Naive thymus-derived CD4-positive, alpha-beta T cell (primary cell): ENCODE measurements at regions of chr1 and their contacts with region 1.

Region 1: GRCh38 chr1:231040019-231040799 is at the start of gene FAM89A:
- DNase-seq: peak; percentile 44 to 79 (median 70)
- ATAC-seq: peak; percentile 91
- H3K4me3 ChIP-seq: peak within 1 kb of the TSS; percentile 67
- H3K4me3 Mint-ChIP-seq: peak within 1 kb of the TSS; percentile 81 to 90 (median 82)
- H3K27ac ChIP-seq: peak within 1 kb of the TSS; percentile 63
- H3K27ac Mint-ChIP-seq: peak within 1 kb of the TSS in 8 of 9 donors; percentile 36 to 83 (median 69)
- H3K4me1 ChIP-seq: peaks cover 10 to 13% of the 10 kb centered on the region in 2 donors
- H3K4me1 Mint-ChIP-seq: peaks cover 27 to 49% (median 36%) of the 10 kb centered on the region in 7 donors
- H3K27me3 ChIP-seq: no peaks in the 10 kb centered on the region
- H3K27me3 Mint-ChIP-seq: peaks cover 0 to 37% (median 0%) of the 10 kb centered on the region in 5 donors
- total RNA-seq, gene FAM89A: 4.5 to 9.0 (median 6.9) TPM

Region 2: GRCh38 chr1:230054092-230054749 is 986.0 kb before region 1 on chr1:
- CTCF ChIA-PET with region 1: no interaction called
- POLR2A ChIA-PET with region 1: no interaction called
- intact Hi-C with region 1: no loop called
- DNase-seq: no peak
- ATAC-seq: no peak
- H3K4me3 ChIP-seq: no peak overlapping the region
- H3K4me3 Mint-ChIP-seq: no peak overlapping the region
- H3K27ac ChIP-seq: no peak overlapping the region
- H3K27ac Mint-ChIP-seq: no peak overlapping the region
- H3K4me1 ChIP-seq: no peaks in the 10 kb centered on the region
- H3K4me1 Mint-ChIP-seq: peaks cover 3 to 16% (median 6%) of the 10 kb centered on the region in 7 donors
- H3K27me3 ChIP-seq: peaks cover 0 to 3% of the 10 kb centered on the region in 2 donors
- H3K27me3 Mint-ChIP-seq: peaks cover 0 to 26% (median 4%) of the 10 kb centered on the region in 5 donors

Region 3: DNA sequence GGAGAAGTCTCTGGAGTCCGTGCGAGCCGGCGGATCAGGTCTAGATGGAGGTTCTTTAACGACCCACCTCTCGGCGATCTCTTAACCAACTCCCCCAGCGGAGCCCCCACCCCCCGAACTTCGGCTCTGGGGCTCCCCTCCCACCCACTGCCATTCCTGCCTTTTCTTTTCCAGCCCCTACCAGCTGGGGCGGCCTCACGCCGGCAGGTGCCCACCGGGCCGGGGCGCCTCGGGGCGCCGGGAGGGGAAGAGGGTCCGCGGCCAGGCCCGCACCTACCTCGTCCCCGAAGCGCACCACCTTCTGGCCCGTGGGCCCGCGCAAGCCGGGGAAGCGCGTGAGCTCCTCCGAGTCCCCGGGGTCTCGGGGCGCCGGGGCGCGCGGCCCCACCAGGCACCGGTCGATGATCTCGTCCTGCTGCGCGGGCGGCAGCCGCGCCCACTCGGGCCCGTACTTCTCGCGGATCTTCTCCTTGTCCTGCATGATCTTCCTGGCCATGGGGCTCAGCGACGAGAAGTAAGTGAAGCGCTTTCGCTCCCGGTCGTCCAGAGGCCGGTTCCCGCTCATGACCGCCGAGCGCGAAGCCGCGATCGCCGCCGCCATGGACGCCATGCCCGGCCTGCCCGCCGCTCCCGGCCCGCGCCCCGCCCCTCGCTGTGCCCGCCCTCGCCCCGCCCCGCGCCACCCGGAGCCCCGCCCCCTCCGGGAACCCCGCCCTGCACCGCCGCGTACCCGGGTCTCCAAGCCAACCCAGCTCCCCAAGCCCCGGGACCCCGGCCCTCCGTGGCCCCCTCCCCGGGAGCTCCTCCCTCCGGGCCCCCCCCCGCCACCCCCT is 172.1 kb before region 1 on chr1 and contains the start of gene C1orf198:
- CTCF ChIA-PET with region 1: no interaction called
- POLR2A ChIA-PET with region 1: no interaction called
- intact Hi-C with region 1: loop called (anchors 1 kb)
- DNase-seq: peak; percentile 48 to 84 (median 69)
- ATAC-seq: peak; percentile 97
- H3K4me3 ChIP-seq: peak within 1 kb of the TSS; percentile 76
- H3K4me3 Mint-ChIP-seq: peak within 1 kb of the TSS; percentile 70 to 94 (median 88)
- H3K27ac ChIP-seq: peak within 1 kb of the TSS; percentile 67
- H3K27ac Mint-ChIP-seq: peak within 1 kb of the TSS in 8 of 9 donors; percentile 29 to 84 (median 62)
- H3K4me1 ChIP-seq: peaks cover 0 to 5% of the 10 kb centered on the region in 2 donors
- H3K4me1 Mint-ChIP-seq: peaks cover 10 to 33% (median 24%) of the 10 kb centered on the region in 7 donors
- H3K27me3 ChIP-seq: peaks cover 0 to 7% of the 10 kb centered on the region in 2 donors
- H3K27me3 Mint-ChIP-seq: peaks cover 13 to 38% (median 25%) of the 10 kb centered on the region in 5 donors
- total RNA-seq, gene C1orf198: 2.9 to 6.0 (median 3.7) TPM

Region 4: DNA sequence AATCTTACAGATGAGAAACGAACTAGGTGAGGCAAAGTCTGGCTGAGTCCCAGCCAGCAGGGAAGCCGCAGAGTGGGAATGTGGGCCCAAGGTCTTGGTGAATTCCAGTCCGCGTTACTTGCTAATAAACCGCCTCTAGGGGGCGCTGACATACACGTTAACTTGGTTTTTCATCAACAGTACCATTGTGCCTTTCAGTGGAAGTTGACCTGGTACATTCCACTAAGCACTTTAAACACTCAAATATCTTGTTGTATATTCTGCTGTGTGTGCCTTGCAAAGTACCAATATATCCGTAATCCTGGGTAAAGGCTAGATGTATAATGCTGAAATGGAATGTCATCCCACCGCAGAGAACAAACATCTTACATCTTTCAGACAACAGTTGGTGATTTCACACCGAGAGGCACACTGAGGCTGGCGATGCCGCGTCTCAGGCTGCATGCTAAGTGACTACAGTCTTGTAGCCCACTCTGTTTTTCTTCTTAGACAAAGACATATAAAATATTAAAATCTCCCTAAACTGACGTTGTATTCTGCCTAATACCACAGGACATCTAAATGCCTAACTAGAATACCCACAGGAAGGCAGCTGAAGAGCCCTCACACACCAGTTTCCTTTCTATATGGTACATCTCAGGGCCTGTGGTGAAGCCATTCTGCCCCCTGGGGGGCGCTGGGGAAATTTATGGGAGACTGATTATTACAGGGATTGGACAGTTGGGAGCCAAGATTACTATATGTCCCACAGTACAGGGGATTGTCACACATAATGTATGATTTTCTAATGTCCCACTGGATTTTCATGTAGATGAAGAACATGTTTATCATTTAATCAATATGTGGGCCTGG is 122.7 kb before region 1 on chr1:
- CTCF ChIA-PET with region 1: no interaction called
- POLR2A ChIA-PET with region 1: no interaction called
- intact Hi-C with region 1: loop called in 1 of 2 experiments (anchors 5 kb)
- DNase-seq: peak; percentile 33 to 74 (median 67)
- ATAC-seq: peak; percentile 81
- H3K4me3 ChIP-seq: no peak overlapping the region
- H3K4me3 Mint-ChIP-seq: no peak overlapping the region
- H3K27ac ChIP-seq: no peak overlapping the region
- H3K27ac Mint-ChIP-seq: peak overlapping the region in 5 of 9 donors; percentile 17 to 32 (median 24)
- H3K4me1 ChIP-seq: no peaks in the 10 kb centered on the region
- H3K4me1 Mint-ChIP-seq: peaks cover 0 to 11% (median 0%) of the 10 kb centered on the region in 7 donors
- H3K27me3 ChIP-seq: no peaks in the 10 kb centered on the region
- H3K27me3 Mint-ChIP-seq: no peaks in the 10 kb centered on the region